Ascending aorta (tissue), 2 donors: ENCODE measurements at regions of chr7 and their contacts with region 1.

Region 1: DNA sequence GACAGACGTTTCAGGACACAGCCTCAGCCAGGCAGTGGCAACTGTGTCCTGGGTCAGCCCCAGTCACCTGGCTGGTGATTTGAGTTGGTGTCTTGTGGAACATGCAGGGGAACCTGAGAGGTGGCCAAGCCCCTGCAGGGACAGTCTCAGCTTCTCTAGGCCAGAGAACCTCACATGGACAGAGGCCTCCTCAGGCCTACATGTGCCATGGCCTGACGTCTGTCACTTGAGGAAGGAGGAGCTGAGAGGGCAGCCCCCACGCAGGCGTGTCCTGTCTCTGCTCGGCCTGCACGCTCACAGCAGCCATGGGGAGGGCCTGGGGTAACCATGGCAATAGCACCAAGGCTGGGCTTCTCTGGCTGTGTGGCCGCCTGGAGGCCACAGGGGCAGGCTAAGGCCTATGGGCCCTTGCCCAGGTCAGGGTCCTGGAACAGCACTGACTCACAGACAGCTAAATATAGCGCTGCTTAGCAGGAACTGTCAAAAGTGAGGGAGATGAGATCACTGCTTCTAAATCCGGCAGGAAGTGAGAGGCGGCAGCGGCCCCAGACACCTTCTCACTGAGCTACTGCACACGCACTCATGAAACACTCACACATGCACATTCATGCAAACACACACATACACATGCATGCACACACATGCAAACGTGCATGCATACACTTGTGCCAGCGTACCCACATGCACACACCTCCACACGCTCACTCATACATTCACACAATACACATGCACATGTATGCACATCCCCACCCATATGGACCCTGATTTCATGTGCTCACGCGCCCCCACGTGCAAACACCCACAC is 57.0 kb downstream of the YKT6 start:
- DNase-seq: peak; percentile 84 to 96
- H3K4me3 ChIP-seq: peak overlapping the region; percentile 10 to 22
- H3K27ac ChIP-seq: peak overlapping the region; percentile 99 to 100
- H3K4me1 ChIP-seq: peaks cover 28 to 34% of the 10 kb centered on the region in 2 donors
- H3K27me3 ChIP-seq: no peaks in the 10 kb centered on the region
- CTCF ChIP-seq: no peak

Region 2: DNA sequence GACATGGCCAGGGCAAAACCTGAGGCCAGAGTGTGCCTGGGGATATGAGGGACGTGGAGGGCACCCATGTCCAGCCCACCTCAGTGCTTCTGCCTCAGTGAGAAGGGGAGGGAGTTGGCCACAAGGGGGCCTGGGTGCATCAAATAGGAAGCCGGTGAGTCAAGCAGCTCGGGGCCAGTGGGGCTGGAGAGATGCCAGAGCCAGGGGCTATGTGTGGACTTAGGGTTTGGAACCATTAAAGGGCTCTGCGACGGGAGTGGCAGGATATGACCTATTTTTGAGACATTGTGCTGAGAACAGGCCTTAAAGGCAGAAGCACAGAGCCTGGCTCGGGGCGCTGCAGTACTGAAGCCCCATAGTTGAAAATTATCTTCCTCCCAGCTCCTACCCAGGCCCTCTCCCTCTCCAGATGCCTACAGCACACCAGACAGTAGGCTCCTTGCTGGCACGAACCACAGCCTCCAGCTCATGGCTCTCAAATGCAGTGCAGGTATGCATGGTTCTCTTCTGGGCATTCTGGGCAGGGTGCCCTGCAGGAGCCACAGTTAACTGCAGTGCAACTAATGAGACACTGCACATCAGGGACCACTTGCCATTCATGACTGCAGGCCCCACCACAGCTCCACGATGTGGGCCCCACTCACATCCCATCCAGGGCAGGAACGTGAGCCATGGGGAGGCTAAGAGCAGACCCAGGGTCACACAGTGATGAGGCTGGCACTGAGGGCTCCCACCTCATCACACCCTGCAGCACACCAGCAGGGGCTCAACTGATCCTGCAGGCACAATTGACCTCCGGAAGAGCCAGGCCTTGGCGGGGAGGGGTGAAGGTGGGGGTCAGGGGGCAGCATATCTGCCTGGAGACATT is 185.2 kb before region 1 on chr7:
- intact Hi-C with region 1: loop called (anchors 5 kb)
- DNase-seq: peak; percentile 64 to 96
- H3K4me3 ChIP-seq: peak overlapping the region in 1 of 2 donors; percentile 34
- H3K27ac ChIP-seq: peak overlapping the region; percentile 70 to 71
- H3K4me1 ChIP-seq: peaks cover 21 to 24% of the 10 kb centered on the region in 2 donors
- H3K27me3 ChIP-seq: no peaks in the 10 kb centered on the region
- CTCF ChIP-seq: peak; percentile 57 to 81 (median 74)

Region 3: GRCh38 chr7:44200647-44201461 is 57.0 kb before region 1 on chr7 and contains the start of gene YKT6:
- intact Hi-C with region 1: loop called (anchors 2 kb)
- DNase-seq: peak; percentile 77 to 97
- H3K4me3 ChIP-seq: peak within 1 kb of the TSS; percentile 67 to 88
- H3K27ac ChIP-seq: peak within 1 kb of the TSS; percentile 73 to 74
- H3K4me1 ChIP-seq: no peaks in the 10 kb centered on the region
- H3K27me3 ChIP-seq: no peaks in the 10 kb centered on the region
- CTCF ChIP-seq: peak; percentile 45 to 81 (median 73)
- total RNA-seq, gene YKT6: 40.1 TPM

Region 4: GRCh38 chr7:44240983-44241510 is 16.8 kb before region 1 on chr7:
- intact Hi-C with region 1: loop called (anchors 1 kb)
- DNase-seq: peak; percentile 35 to 87
- H3K4me3 ChIP-seq: peak overlapping the region; percentile 11 to 38
- H3K27ac ChIP-seq: no peak overlapping the region
- H3K4me1 ChIP-seq: no peaks in the 10 kb centered on the region
- H3K27me3 ChIP-seq: no peaks in the 10 kb centered on the region
- CTCF ChIP-seq: peak; percentile 71 to 83 (median 80)

Region 5: GRCh38 chr7:44383566-44383965 is 125.7 kb after region 1 on chr7:
- intact Hi-C with region 1: loop called (anchors 2 kb)
- DNase-seq: peak; percentile 63 to 81
- H3K4me3 ChIP-seq: no peak overlapping the region
- H3K27ac ChIP-seq: peak overlapping the region; percentile 76 to 88
- H3K4me1 ChIP-seq: peaks cover 24 to 42% of the 10 kb centered on the region in 2 donors
- H3K27me3 ChIP-seq: no peaks in the 10 kb centered on the region
- CTCF ChIP-seq: no peak

Region 6: GRCh38 chr7:44490351-44491200 is 232.8 kb after region 1 on chr7 and contains the start of gene NUDCD3:
- intact Hi-C with region 1: loop called (anchors 2 kb)
- DNase-seq: peak; percentile 28 to 89
- H3K4me3 ChIP-seq: peak within 1 kb of the TSS; percentile 89 to 95
- H3K27ac ChIP-seq: peak within 1 kb of the TSS; percentile 97
- H3K4me1 ChIP-seq: peaks cover 4 to 25% of the 10 kb centered on the region in 2 donors
- H3K27me3 ChIP-seq: no peaks in the 10 kb centered on the region
- CTCF ChIP-seq: peak in 2 of 3 experiments; percentile 17 to 30
- total RNA-seq, gene NUDCD3: 39.3 TPM

Region 7: GRCh38 chr7:44581879-44582603 is 324.2 kb after region 1 on chr7 and contains the start of gene TMED4:
- intact Hi-C with region 1: loop called (anchors 5 kb)
- DNase-seq: peak; percentile 98 to 100
- H3K4me3 ChIP-seq: peak within 1 kb of the TSS; percentile 92 to 96
- H3K27ac ChIP-seq: peak within 1 kb of the TSS; percentile 88 to 97
- H3K4me1 ChIP-seq: peaks cover 6 to 17% of the 10 kb centered on the region in 2 donors
- H3K27me3 ChIP-seq: no peaks in the 10 kb centered on the region
- CTCF ChIP-seq: no peak
- total RNA-seq, gene TMED4: 69.1 TPM